ENCODE measurements at regions of chr3 and their contacts with region 1.

Region 1: GRCh38 chr3:118782755-118783202 is 251.9 kb downstream of the IGSF11 start:
- DNase-seq: peak; percentile 90
- ATAC-seq: peak; percentile 98
- H3K4me3 ChIP-seq: no peak overlapping the region; the same call in 1 of the 2 replicates
- H3K27ac ChIP-seq: peak overlapping the region; percentile 60
- H3K4me1 ChIP-seq: peaks cover 16% of the 10 kb centered on the region
- H3K27me3 ChIP-seq: no peaks in the 10 kb centered on the region
- CTCF ChIP-seq: no peak
- EP300 ChIP-seq: peak; percentile 78 to 81; a peak in 2 of 4 replicates
- POLR2A ChIP-seq: 0 out of 2 replicates have a peak, but pooled peaks have one; percentile 18
- RAD21 ChIP-seq: no peak

Region 2: GRCh38 chr3:118760585-118761290 is 22.0 kb before region 1 on chr3:
- CTCF ChIA-PET with region 1: interaction called, 8 read pairs
- POLR2A ChIA-PET with region 1: interaction called, 14 read pairs
- RAD21 ChIA-PET with region 1: interaction called, 12 read pairs
- SMC1A ChIA-PET with region 1: interaction called, 34 read pairs
- in situ Hi-C with region 1: no loop called
- intact Hi-C with region 1: no loop called
- DNase-seq: no peak
- ATAC-seq: peak; percentile 84
- H3K4me3 ChIP-seq: no peak overlapping the region
- H3K27ac ChIP-seq: no peak overlapping the region
- H3K4me1 ChIP-seq: no peaks in the 10 kb centered on the region
- H3K27me3 ChIP-seq: no peaks in the 10 kb centered on the region
- CTCF ChIP-seq: peak in 2 of 3 experiments; percentile 35 to 58; a peak in 3 of 6 replicates
- EP300 ChIP-seq: no peak
- POLR2A ChIP-seq: no peak
- RAD21 ChIP-seq: peak; percentile 44; the same call in 1 of the 2 replicates

Region 3: DNA sequence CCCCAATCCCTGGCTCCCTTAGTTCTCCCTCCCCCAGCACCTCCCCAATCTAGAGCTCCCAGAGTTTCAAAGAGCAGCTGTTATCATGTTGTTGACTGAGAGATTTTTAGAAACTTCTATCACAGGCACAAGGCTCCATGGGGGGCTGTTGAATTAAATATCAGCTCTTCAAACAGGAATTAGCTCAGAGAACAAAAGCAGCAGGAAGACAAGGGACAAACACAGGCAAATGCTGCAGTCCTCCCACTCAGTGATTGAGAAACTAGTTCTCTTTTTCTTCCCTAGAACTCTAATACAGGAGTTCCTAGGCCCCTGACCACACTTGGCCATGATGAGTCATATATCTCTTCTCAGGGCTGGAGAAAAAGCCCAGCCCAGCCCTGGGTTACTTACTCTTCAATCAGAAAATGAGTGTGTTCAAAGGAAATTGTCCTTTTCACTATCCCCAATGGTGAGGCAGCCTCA is 10.2 kb before region 1 on chr3:
- CTCF ChIA-PET with region 1: interaction called, 9 read pairs
- POLR2A ChIA-PET with region 1: interaction called, 14 read pairs
- RAD21 ChIA-PET with region 1: interaction called, 4 read pairs
- SMC1A ChIA-PET with region 1: interaction called, 34 read pairs
- in situ Hi-C with region 1: no loop called
- intact Hi-C with region 1: no loop called
- DNase-seq: peak; percentile 64
- ATAC-seq: peak; percentile 96
- H3K4me3 ChIP-seq: no peak overlapping the region
- H3K27ac ChIP-seq: peak overlapping the region; percentile 34; the same call in 1 of the 2 replicates
- H3K4me1 ChIP-seq: peaks cover 4% of the 10 kb centered on the region
- H3K27me3 ChIP-seq: no peaks in the 10 kb centered on the region
- CTCF ChIP-seq: no peak
- EP300 ChIP-seq: peak in 1 of 2 experiments; percentile 29; a peak in 1 of 4 replicates
- POLR2A ChIP-seq: no peak
- RAD21 ChIP-seq: no peak

Region 4: DNA sequence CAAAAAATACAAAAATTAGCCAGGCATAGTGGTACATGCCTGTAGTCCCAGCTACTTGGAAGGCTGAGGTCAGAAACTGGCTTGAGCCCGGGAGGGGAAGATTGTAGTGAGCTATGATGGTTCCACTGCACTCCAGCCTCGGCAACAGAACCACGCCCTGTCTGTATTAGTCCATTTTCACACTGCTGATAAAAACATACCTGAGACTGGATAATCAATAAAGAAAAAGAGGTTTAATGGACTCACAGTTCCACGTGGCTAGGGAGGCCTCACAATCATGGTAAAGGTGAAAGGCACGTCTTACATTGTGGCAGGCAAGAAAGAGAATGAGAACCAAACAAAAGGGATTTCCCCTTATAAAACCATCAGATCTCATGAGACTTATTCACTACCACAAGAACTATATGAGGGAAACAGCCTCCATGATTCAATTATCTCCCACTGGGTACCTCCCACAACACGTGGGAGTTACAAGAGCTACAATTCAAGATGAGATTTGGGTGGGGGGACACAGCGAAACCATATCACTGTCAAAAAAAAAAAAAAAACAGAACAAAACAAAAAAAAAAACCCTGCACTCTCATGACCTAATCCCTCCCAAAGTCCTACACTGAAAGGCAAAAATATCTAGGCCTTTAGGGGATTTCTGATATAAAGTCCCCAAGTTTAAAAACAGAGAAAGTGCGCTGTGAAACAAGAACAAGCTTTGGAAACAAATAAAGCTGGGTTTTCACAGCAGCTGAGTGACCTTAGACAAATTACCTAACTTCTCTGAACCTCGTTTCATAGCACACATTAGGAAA is 27.1 kb after region 1 on chr3:
- CTCF ChIA-PET with region 1: interaction called, 46 read pairs
- POLR2A ChIA-PET with region 1: interaction called, 33 read pairs
- RAD21 ChIA-PET with region 1: interaction called, 207 read pairs
- SMC1A ChIA-PET with region 1: interaction called, 394 read pairs
- in situ Hi-C with region 1: no loop called
- intact Hi-C with region 1: loop called (anchors 1 kb)
- DNase-seq: peak; percentile 71
- ATAC-seq: peak; percentile 59
- H3K4me3 ChIP-seq: peak overlapping the region; percentile 69
- H3K27ac ChIP-seq: peak overlapping the region; percentile 72
- H3K4me1 ChIP-seq: peaks cover 10% of the 10 kb centered on the region; the same call in 1 of the 2 replicates
- H3K27me3 ChIP-seq: no peaks in the 10 kb centered on the region
- CTCF ChIP-seq: no peak
- EP300 ChIP-seq: peak in 1 of 2 experiments; percentile 28; a peak in 2 of 4 replicates
- POLR2A ChIP-seq: 0 out of 2 replicates have a peak, but pooled peaks have one; percentile 29
- RAD21 ChIP-seq: no peak

Region 5: GRCh38 chr3:118932822-118933558 is 150.2 kb after region 1 on chr3:
- CTCF ChIA-PET with region 1: no interaction called
- POLR2A ChIA-PET with region 1: no interaction called
- RAD21 ChIA-PET with region 1: no interaction called
- SMC1A ChIA-PET with region 1: no interaction called
- in situ Hi-C with region 1: no loop called
- intact Hi-C with region 1: no loop called
- DNase-seq: no peak
- ATAC-seq: peak; percentile 56
- H3K4me3 ChIP-seq: no peak overlapping the region
- H3K27ac ChIP-seq: no peak overlapping the region
- H3K4me1 ChIP-seq: no peaks in the 10 kb centered on the region
- H3K27me3 ChIP-seq: no peaks in the 10 kb centered on the region
- CTCF ChIP-seq: no peak
- EP300 ChIP-seq: no peak
- POLR2A ChIP-seq: no peak
- RAD21 ChIP-seq: no peak

Measured in GM12878 (cell line).